ENCODE measurements at regions of chr10 and their contacts with region 1.

Region 1: GRCh38 chr10:100046021-100046486 is 35.6 kb downstream of the CPN1 start:
- DNase-seq: peak; percentile 74
- H3K4me3 ChIP-seq: no peak overlapping the region; a peak in 1 of 4 replicates
- H3K27ac ChIP-seq: peak overlapping the region in 1 of 2 experiments; percentile 41; a peak in 1 of 4 replicates
- H3K4me1 ChIP-seq: peaks cover 0 to 12% of the 10 kb centered on the region in 2 experiments; a peak in 2 of 4 replicates
- H3K27me3 ChIP-seq: no peaks in the 10 kb centered on the region
- CTCF ChIP-seq: peak; percentile 97
- EP300 ChIP-seq: no peak
- RAD21 ChIP-seq: peak; percentile 87

Region 2: GRCh38 chr10:99854860-99855259 is 191.2 kb before region 1 on chr10:
- CTCF ChIA-PET with region 1: interaction called, 108 read pairs
- POLR2A ChIA-PET with region 1: no interaction called
- DNase-seq: peak; percentile 50
- H3K4me3 ChIP-seq: no peak overlapping the region
- H3K27ac ChIP-seq: no peak overlapping the region; a peak in 1 of 4 replicates
- H3K4me1 ChIP-seq: no peaks in the 10 kb centered on the region
- H3K27me3 ChIP-seq: no peaks in the 10 kb centered on the region
- CTCF ChIP-seq: peak; percentile 72
- EP300 ChIP-seq: no peak
- RAD21 ChIP-seq: peak; percentile 78

Region 3: DNA sequence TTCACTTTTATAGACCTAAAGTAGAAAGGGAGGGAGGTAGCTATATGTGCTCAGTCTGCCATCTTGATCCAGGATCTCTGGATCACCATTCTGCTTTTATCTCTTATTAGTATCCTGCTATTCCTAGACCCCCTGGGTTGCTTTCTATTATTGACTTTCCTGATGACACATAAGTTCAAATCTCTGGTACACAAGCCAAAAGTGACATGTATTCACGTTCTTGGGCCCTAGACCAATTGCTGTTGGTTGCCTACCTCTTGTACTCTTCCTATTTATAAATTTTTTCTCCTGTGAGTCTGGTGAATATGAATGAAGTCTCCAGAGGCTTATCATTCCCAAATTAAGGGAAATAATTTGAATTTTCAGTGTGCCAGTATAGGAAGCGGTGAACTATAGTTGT is 93.3 kb before region 1 on chr10:
- CTCF ChIA-PET with region 1: no interaction called
- POLR2A ChIA-PET with region 1: no interaction called
- DNase-seq: no peak
- H3K4me3 ChIP-seq: no peak overlapping the region
- H3K27ac ChIP-seq: peak overlapping the region in 1 of 2 experiments; percentile 30; a peak in 1 of 4 replicates
- H3K4me1 ChIP-seq: peaks cover 0 to 8% of the 10 kb centered on the region in 2 experiments; a peak in 1 of 4 replicates
- H3K27me3 ChIP-seq: no peaks in the 10 kb centered on the region
- CTCF ChIP-seq: no peak
- EP300 ChIP-seq: no peak
- RAD21 ChIP-seq: no peak

Region 4: DNA sequence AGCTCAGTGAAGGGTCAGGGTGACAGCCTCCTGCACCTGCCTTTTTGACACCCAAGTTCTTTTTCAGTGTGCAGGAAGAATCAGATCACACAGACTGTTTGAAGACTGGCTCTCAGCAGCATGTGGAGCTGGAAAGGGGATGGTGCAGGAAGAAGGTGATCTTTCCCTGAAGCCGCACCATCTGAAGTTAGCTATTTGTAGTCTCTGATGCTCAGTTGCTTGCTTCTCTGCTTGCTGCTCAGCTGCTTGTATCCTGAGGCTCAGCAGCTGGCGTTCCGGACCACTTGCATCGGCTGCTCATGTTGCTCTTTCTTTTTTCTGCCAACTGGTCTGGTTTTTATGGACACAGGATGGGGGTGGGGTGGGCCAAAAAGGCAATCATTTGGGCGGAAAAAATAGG is 20.5 kb before region 1 on chr10:
- CTCF ChIA-PET with region 1: interaction called, 19 read pairs
- POLR2A ChIA-PET with region 1: no interaction called
- DNase-seq: no peak
- H3K4me3 ChIP-seq: no peak overlapping the region
- H3K27ac ChIP-seq: no peak overlapping the region
- H3K4me1 ChIP-seq: peaks cover 0 to 5% of the 10 kb centered on the region in 2 experiments; a peak in 1 of 4 replicates
- H3K27me3 ChIP-seq: no peaks in the 10 kb centered on the region
- CTCF ChIP-seq: no peak
- EP300 ChIP-seq: no peak
- RAD21 ChIP-seq: no peak